ENCODE measurements at regions of chr13 and their contacts with region 1.

Region 1: DNA sequence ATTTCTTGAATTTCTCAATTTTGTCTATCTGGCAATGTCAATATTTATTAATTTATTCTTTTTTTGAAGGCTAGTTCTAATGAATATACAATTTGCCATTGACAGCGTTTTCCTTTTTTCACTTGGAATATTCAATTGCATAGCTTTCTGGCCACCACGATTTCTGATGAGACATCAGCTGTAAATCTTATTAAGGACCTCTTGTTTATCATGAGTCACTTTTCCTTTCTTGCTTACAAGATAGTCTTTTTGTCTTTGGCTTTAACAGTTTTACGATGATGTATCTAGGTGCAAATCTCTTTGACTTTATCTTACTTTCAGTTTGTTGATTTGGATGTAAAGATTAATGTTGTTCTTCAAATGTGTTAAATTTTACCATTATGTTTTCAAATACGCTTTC is 991.6 kb upstream of the SLC10A2 start:
- DNase-seq: no peak
- ATAC-seq: no peak
- H3K4me3 ChIP-seq: no peak overlapping the region
- H3K27ac ChIP-seq: no peak overlapping the region
- H3K4me1 ChIP-seq: no peaks in the 10 kb centered on the region
- H3K27me3 ChIP-seq: no peaks in the 10 kb centered on the region
- CTCF ChIP-seq: no peak
- POLR2A ChIP-seq: no peak
- RAD21 ChIP-seq: no peak

Region 2: GRCh38 chr13:104099750-104100149 is 41.9 kb after region 1 on chr13:
- CTCF ChIA-PET with region 1: no interaction called
- POLR2A ChIA-PET with region 1: no interaction called
- dilution Hi-C with region 1: no loop called
- in situ Hi-C with region 1: no loop called
- intact Hi-C with region 1: loop called (anchors 5 kb)
- DNase-seq: no peak
- ATAC-seq: no peak
- H3K4me3 ChIP-seq: no peak overlapping the region
- H3K27ac ChIP-seq: no peak overlapping the region
- H3K4me1 ChIP-seq: no peaks in the 10 kb centered on the region
- H3K27me3 ChIP-seq: no peaks in the 10 kb centered on the region
- CTCF ChIP-seq: no peak
- POLR2A ChIP-seq: no peak
- RAD21 ChIP-seq: no peak

Measured in IMR-90 (cell line).